Right ventricle myocardium inferior (tissue), 1 donor: ENCODE measurements at regions of chr16 and their contacts with region 1.

Region 1: DNA sequence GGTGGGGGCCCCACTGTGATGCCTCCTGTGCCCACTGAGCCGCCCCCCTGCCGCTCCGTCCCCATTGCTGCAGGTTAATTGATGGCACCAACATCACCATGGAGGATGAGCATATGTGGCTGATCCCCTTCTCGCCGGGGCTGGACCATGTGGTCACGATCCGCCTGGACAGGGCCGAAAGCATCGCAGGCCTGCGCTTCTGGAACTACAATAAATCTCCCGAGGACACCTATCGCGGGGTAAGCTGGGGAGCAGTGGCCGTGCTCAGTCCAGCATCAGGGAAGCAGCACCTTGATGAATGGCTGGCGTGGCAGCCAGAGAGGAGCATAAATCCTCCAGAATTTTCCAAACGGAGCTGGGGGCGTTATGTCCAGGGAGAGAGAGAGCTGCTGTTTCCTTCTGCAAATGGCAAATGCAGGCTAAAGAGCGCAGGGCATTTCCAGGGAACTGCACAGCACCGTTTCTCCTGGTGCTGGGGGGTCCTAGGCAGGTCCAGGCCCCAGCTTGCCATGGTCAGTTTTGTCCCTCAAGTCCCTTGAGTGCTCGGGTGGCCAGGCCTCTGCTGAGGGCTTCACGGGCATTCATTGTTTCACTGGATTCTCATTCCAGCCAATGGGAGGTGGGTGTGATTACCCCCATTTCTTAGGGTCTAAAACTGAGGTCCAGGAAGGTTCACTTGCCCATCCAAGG is 216.4 kb downstream of the KATNIP start:
- DNase-seq: no peak
- ATAC-seq: no peak

Region 2: DNA sequence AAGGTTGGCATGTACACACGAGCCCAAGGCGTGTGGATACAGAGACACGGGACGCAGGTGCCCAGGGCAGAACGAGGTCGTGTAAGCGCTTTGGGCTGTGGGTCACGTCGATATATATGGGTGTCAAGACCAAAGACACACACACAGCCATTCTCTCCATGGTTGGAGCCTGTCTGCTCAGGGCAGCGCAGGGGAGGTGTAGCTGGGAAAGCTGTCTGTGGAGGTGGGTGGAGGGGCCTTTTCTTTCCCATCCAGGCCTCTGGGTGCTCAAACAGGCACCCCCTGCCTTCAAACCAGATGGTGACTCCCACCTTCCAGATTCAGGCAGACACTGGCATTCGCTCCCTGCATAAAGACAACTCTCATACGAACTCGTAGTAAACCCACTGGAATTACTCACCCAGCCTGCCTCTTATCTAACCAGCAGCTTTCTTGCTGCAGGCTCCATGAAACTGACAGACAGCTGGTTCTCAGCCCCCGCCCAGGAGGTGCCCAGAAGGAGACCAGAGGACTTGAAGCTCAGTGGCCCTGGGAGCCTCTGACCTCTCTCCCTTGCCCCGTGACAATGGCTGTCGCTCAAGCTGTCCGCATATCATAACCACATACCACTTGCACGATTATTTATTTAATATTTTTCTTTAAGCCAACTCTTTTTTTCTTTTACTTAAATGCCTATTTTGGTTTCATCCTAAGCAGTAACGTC is 20.7 kb after region 1 on chr16:
- intact Hi-C with region 1: loop called (anchors 1 kb)
- DNase-seq: peak; percentile 40
- ATAC-seq: no peak